ENCODE measurements at regions of chr6 and their contacts with region 1.

Region 1: GRCh38 chr6:95587989-95588388 is 10.7 kb downstream of the MANEA start:
- DNase-seq: no peak
- ATAC-seq: peak; percentile 47
- H3K4me3 Mint-ChIP-seq: peak overlapping the region; percentile 78
- H3K27ac Mint-ChIP-seq: peak overlapping the region; percentile 67
- H3K4me1 Mint-ChIP-seq: peaks cover 16% of the 10 kb centered on the region
- H3K27me3 Mint-ChIP-seq: no peaks in the 10 kb centered on the region

Region 2: GRCh38 chr6:95577304-95578105 is 10.5 kb before region 1 on chr6 and contains the start of gene MANEA:
- POLR2A ChIA-PET with region 1: interaction called, 18 read pairs
- DNase-seq: peak; percentile 85
- ATAC-seq: peak; percentile 88
- H3K4me3 Mint-ChIP-seq: peak within 1 kb of the TSS; percentile 93
- H3K27ac Mint-ChIP-seq: peak within 1 kb of the TSS; percentile 97
- H3K4me1 Mint-ChIP-seq: peaks cover 33% of the 10 kb centered on the region
- H3K27me3 Mint-ChIP-seq: no peaks in the 10 kb centered on the region
- total RNA-seq, gene MANEA: 17.9 to 18.5 TPM

Measured in activated naive CD8-positive, alpha-beta T cell treated with anti-CD3 and anti-CD28 coated beads, Interleukin-2, amount 10 ng/mL, durations not matched to agents 7 days and 5 days (primary cell).